GM12878 (cell line): ENCODE measurements at regions of chr9 and their contacts with region 1.

Region 1: GRCh38 chr9:22037954-22038690 is 29.0 kb upstream of the CDKN2B start:
- DNase-seq: no peak
- ATAC-seq: peak; percentile 53; the same call in 2 of the 3 replicates
- H3K4me3 ChIP-seq: no peak overlapping the region
- H3K27ac ChIP-seq: no peak overlapping the region
- H3K4me1 ChIP-seq: no peaks in the 10 kb centered on the region
- H3K27me3 ChIP-seq: no peaks in the 10 kb centered on the region; a peak in 1 of 4 replicates
- CTCF ChIP-seq: peak; percentile 30 to 48 (median 34); a peak in 4 of 6 replicates
- EP300 ChIP-seq: no peak
- POLR2A ChIP-seq: no peak
- RAD21 ChIP-seq: peak; percentile 76

Region 2: GRCh38 chr9:22097697-22098096 is 59.6 kb after region 1 on chr9:
- CTCF ChIA-PET with region 1: no interaction called
- POLR2A ChIA-PET with region 1: no interaction called
- RAD21 ChIA-PET with region 1: no interaction called
- SMC1A ChIA-PET with region 1: no interaction called
- in situ Hi-C with region 1: no loop called
- intact Hi-C with region 1: no loop called
- DNase-seq: no peak
- ATAC-seq: no peak
- H3K4me3 ChIP-seq: no peak overlapping the region
- H3K27ac ChIP-seq: no peak overlapping the region
- H3K4me1 ChIP-seq: no peaks in the 10 kb centered on the region
- H3K27me3 ChIP-seq: peaks cover 0 to 3% of the 10 kb centered on the region in 2 experiments; a peak in 1 of 4 replicates
- CTCF ChIP-seq: no peak
- EP300 ChIP-seq: no peak
- POLR2A ChIP-seq: no peak
- RAD21 ChIP-seq: no peak

Region 3: DNA sequence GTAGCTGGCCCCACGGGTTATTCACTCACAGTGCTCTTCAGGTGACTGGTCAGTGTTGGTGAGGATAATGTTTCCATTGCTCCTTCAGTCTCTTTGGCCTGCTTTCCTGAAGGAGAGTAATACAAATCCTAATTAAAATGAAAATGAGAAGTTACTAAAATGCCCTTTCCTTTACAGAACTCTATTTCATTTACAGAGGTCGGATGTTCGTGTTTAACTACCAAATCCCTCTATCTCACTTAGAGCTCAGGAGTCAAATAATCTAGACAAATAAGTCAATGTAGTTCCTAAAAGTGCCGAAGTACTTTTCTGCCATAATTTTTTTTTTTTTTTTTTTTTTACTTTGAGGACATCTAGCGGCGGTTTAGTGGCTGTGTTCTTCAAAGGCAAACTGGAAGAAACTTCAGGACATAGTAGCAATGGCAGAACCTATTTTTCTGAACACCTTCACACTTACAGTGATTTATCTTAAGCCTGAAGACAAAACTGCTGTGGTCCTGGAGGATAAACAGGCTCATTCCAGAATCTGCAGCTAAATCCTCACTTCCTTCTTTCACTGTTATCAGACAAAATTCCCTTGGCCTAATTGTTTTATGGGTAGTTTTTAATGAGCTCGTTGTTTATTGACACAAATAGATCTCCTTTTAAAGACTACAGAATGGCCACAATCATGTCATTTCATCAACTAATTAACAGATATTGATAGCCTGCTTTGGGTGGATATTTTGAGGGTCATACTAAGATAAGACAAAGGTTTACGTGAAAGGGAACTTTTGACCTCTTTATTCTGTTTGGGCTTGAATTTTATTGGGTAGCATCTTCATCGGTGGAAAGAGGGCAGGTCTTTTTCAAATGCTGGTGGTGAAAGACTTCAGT is 200.9 kb after region 1 on chr9:
- CTCF ChIA-PET with region 1: interaction called, 7 read pairs
- POLR2A ChIA-PET with region 1: no interaction called
- RAD21 ChIA-PET with region 1: interaction called, 5 read pairs
- SMC1A ChIA-PET with region 1: interaction called, 3 read pairs
- in situ Hi-C with region 1: no loop called
- intact Hi-C with region 1: loop called (anchors 10 kb)
- DNase-seq: no peak
- ATAC-seq: peak; percentile 50
- H3K4me3 ChIP-seq: no peak overlapping the region
- H3K27ac ChIP-seq: no peak overlapping the region
- H3K4me1 ChIP-seq: peaks cover 19% of the 10 kb centered on the region
- H3K27me3 ChIP-seq: peaks cover 0 to 7% of the 10 kb centered on the region in 2 experiments; a peak in 2 of 4 replicates
- CTCF ChIP-seq: peak in 2 of 3 experiments; percentile 36 to 43; a peak in 4 of 6 replicates
- EP300 ChIP-seq: no peak
- POLR2A ChIP-seq: no peak
- RAD21 ChIP-seq: peak; percentile 37; the same call in 1 of the 2 replicates